Aorta (tissue), 5 donors: ENCODE measurements at regions of chr15 and their contacts with region 1.

Region 1: GRCh38 chr15:78149068-78149804 is at the start of gene IDH3A:
- DNase-seq: peak; percentile 100
- ATAC-seq: peak; percentile 99
- H3K4me3 ChIP-seq: peak within 1 kb of the TSS; percentile 84 to 94
- H3K27ac ChIP-seq: peak within 1 kb of the TSS; percentile 49 to 66
- H3K4me1 ChIP-seq: no peaks in the 10 kb centered on the region
- H3K27me3 ChIP-seq: no peaks in the 10 kb centered on the region
- total RNA-seq, gene IDH3A: 60.7 to 68.3 TPM

Region 2: DNA sequence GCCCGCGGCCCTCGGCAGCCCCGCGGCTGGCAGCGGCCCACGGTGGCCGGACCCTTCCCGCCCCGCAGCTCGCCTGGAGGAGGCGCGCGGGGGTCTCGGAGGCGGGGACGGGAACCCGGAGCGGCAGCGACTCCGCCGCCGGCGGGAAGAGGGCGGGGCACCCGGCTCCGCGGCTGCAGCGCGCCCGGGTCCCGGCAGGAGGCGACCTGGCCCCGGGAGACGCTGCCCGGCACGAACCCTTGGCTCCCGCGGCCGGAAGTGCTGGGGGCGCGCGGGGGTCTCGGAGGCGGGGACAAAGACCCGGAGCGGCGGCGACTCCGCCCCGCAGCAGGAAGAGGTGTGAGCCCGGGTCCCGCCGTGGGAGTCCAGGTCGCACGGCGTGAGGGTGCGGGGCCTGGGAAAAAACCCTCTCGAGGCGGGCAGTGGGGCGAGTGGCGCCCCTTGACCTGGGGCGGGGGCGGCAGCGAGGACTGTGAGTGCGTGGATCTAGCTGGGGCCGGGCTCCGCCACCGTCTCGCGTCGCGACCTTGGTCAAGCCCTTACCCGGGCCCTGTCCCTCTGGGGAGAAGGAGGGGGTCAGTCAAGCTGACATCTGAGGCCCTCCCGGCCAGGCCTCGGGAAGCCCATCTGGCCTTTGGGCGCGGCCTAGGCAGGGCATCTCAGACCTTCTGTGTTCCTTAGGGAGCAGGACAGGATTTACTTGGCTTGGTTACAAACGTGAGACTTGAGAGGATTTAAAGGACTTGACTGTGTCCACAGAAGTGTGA is 17.8 kb before region 1 on chr15 and contains the start of gene CIB2:
- intact Hi-C with region 1: loop called in 1 of 2 experiments (anchors 2 kb)
- DNase-seq: peak; percentile 77 to 91
- ATAC-seq: peak; percentile 91
- H3K4me3 ChIP-seq: peak within 1 kb of the TSS; percentile 49 to 60
- H3K27ac ChIP-seq: peak within 1 kb of the TSS in 1 of 2 donors; percentile 9
- H3K4me1 ChIP-seq: no peaks in the 10 kb centered on the region
- H3K27me3 ChIP-seq: no peaks in the 10 kb centered on the region
- total RNA-seq, gene CIB2: 6.3 to 6.9 TPM

Region 3: DNA sequence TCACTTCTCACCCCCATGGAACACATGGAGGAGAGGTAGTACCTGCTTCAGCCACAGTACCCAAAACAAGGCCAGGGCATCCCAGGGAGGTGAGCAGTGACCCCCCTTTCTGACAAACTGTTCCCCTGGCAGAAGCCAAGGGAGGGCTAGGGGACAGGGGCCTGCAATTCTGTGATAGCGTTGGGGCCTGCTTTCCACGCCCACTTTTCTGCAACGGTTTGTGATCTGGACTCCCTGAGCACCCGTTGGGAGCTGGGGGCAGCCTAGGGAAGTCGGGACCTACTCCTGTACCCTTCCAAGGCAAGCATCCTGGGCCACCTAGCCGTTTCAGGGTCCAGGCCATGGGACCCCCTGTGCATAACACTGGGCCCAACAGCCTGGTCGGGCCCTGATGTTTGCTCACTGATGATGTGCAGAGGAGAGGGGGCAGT is 114.1 kb after region 1 on chr15:
- intact Hi-C with region 1: no loop called
- DNase-seq: peak in 1 of 2 donors; percentile 61
- ATAC-seq: no peak
- H3K4me3 ChIP-seq: no peak overlapping the region
- H3K27ac ChIP-seq: no peak overlapping the region
- H3K4me1 ChIP-seq: no peaks in the 10 kb centered on the region
- H3K27me3 ChIP-seq: no peaks in the 10 kb centered on the region